GM12878 (cell line): ENCODE measurements at regions of chr9 and their contacts with region 1.

Region 1: DNA sequence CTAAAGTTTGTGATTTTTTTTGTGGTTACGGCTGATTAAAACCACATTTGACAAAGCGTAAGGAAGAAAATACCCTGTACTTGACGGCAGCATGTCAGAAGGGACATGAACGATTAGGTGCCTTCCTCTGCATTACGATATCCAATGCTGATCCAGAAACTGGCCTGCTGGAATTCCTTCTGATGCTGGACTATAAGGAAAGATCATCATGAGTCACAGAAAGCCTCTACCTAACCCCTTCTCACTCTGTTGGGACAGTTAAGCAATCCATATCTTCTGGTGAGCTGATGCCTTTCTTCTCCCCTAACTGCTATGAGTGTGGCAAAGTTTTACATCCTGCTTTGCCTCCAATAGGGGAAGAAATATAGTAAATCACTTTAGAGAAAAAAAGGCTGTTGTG is 78.4 kb upstream of the PAPPA start:
- DNase-seq: no peak
- ATAC-seq: no peak
- H3K4me3 ChIP-seq: no peak overlapping the region
- H3K27ac ChIP-seq: no peak overlapping the region
- H3K4me1 ChIP-seq: no peaks in the 10 kb centered on the region
- H3K27me3 ChIP-seq: no peaks in the 10 kb centered on the region
- CTCF ChIP-seq: no peak
- EP300 ChIP-seq: no peak
- POLR2A ChIP-seq: no peak
- RAD21 ChIP-seq: no peak

Region 2: DNA sequence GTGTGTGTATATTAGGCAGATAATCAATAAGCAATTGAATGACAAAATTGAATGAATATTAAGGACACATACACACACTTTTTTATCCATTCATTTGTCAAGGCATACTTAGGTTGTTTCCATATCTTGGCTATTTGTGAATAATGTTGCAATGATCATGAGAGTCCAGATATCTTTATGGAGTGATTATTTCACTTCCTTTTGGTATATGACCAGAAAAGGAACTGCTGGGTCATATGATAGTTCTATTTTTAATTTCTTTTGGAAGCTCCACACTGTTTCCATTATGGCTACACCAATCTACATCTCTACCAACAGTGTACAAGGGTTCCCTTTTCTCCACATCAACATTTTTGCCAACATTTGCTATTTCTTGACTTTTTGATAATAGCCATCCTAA is 59.3 kb before region 1 on chr9:
- CTCF ChIA-PET with region 1: no interaction called
- POLR2A ChIA-PET with region 1: no interaction called
- RAD21 ChIA-PET with region 1: no interaction called
- SMC1A ChIA-PET with region 1: no interaction called
- in situ Hi-C with region 1: no loop called
- intact Hi-C with region 1: loop called (anchors 10 kb)
- DNase-seq: no peak
- ATAC-seq: no peak
- H3K4me3 ChIP-seq: no peak overlapping the region
- H3K27ac ChIP-seq: no peak overlapping the region
- H3K4me1 ChIP-seq: no peaks in the 10 kb centered on the region
- H3K27me3 ChIP-seq: no peaks in the 10 kb centered on the region
- CTCF ChIP-seq: no peak
- EP300 ChIP-seq: no peak
- POLR2A ChIP-seq: no peak
- RAD21 ChIP-seq: no peak